ENCODE measurements at regions of chr11 and their contacts with region 1.

Region 1: GRCh38 chr11:118565051-118565450 is 680 bp downstream of the IFT46 start:
- DNase-seq: peak; percentile 11
- ATAC-seq: no peak
- H3K4me3 ChIP-seq: peak overlapping the region; percentile 41; the same call in 1 of the 2 replicates
- H3K27ac ChIP-seq: no peak overlapping the region
- H3K4me1 ChIP-seq: peaks cover 6% of the 10 kb centered on the region; the same call in 1 of the 2 replicates
- H3K27me3 ChIP-seq: no peaks in the 10 kb centered on the region
- CTCF ChIP-seq: no peak

Region 2: GRCh38 chr11:118180300-118180703 is 384.7 kb before region 1 on chr11:
- CTCF ChIA-PET with region 1: no interaction called
- POLR2A ChIA-PET with region 1: no interaction called
- intact Hi-C with region 1: no loop called
- DNase-seq: no peak
- ATAC-seq: no peak
- H3K4me3 ChIP-seq: no peak overlapping the region
- H3K27ac ChIP-seq: no peak overlapping the region
- H3K4me1 ChIP-seq: peaks cover 10% of the 10 kb centered on the region
- H3K27me3 ChIP-seq: no peaks in the 10 kb centered on the region
- CTCF ChIP-seq: no peak

Region 3: DNA sequence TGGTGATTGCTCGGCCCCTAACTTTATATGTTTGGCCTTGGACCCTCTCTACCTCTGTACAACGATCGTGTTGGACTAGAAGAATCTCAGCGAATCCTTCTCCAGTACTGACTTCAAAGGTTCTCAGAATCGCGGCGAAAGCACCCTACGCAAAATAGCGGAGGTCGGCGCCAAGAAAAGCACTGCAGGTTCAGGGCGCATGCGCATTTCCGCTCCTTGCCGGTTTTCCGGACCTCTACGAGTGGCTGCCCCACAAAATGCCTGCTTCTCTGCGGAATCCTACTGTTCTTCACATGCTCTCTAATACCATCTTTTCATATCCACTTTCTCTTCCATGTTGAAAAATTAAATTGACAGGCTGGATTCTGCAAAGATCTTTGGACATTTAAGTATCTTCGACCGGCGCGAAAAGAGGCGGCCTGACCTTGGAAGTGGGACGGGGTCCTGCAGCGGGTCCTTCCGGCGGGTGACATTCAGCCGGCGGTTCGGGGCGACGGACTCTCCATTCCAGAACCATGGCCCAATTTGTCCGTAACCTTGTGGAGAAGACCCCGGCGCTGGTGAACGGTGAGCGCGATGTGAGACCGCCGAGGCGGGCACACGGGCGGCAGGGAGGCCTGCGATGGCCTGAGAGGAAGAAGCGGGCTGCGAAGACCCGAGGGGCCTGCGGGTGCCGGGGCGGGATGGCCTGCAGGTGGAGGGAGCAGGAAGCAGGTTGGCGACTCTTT is 163.7 kb before region 1 on chr11 and contains the start of gene ATP5MG:
- CTCF ChIA-PET with region 1: no interaction called
- POLR2A ChIA-PET with region 1: no interaction called
- intact Hi-C with region 1: loop called (anchors 10 kb)
- DNase-seq: peak; percentile 95
- ATAC-seq: peak; percentile 79
- H3K4me3 ChIP-seq: peak within 1 kb of the TSS; percentile 90
- H3K27ac ChIP-seq: peak within 1 kb of the TSS; percentile 77
- H3K4me1 ChIP-seq: peaks cover 14% of the 10 kb centered on the region; the same call in 1 of the 2 replicates
- H3K27me3 ChIP-seq: no peaks in the 10 kb centered on the region
- CTCF ChIP-seq: 0 out of 2 replicates have a peak, but pooled peaks have one; percentile 19
- total RNA-seq, gene ATP5MG: 256 and 375 TPM in 2 replicates

Region 4: GRCh38 chr11:118530408-118531339 is 34.4 kb before region 1 on chr11 and contains the start of gene TMEM25:
- CTCF ChIA-PET with region 1: no interaction called
- POLR2A ChIA-PET with region 1: no interaction called
- intact Hi-C with region 1: loop called (anchors 1 kb)
- DNase-seq: peak; percentile 79
- ATAC-seq: peak; percentile 80
- H3K4me3 ChIP-seq: peak within 1 kb of the TSS; percentile 93
- H3K27ac ChIP-seq: peak within 1 kb of the TSS; percentile 4; the same call in 1 of the 2 replicates
- H3K4me1 ChIP-seq: peaks cover 18% of the 10 kb centered on the region
- H3K27me3 ChIP-seq: no peaks in the 10 kb centered on the region
- CTCF ChIP-seq: no peak
- total RNA-seq, gene TMEM25: 49.8 and 50.4 TPM in 2 replicates